ENCODE measurements at regions of chr17 and their contacts with region 1.

Region 1: DNA sequence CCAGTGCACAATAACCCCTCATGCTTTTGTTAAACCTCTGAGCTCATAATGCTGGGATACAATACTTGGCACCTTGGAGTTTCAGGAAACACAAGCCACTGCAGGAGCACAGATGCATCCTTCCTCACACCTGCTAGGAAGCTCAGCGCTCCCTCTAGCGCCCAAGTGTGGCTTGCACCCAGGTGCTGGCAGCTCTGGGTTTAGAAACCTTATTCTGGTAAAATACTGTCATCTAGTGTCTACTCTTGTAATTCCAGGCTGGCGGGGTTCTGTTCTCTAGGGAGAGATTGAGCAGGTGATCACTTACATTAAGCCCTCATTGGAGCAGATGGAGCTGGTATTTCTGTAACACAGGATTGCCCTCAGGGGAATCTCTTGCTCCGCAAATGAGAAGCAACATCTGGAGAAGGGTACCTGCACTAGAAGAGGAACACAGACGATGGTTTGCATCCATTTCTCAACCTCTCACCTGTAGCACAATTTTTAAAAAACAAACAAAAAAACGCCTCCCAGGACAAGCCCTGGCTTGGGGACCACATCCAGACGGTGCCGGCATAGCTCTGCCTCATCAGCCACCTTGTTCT is 1.5 kb downstream of the CCL1 start:
- DNase-seq: peak; percentile 87
- H3K4me3 Mint-ChIP-seq: no peak overlapping the region
- H3K27ac Mint-ChIP-seq: no peak overlapping the region
- H3K4me1 Mint-ChIP-seq: peaks cover 35% of the 10 kb centered on the region
- H3K27me3 Mint-ChIP-seq: peaks cover 57% of the 10 kb centered on the region

Region 2: DNA sequence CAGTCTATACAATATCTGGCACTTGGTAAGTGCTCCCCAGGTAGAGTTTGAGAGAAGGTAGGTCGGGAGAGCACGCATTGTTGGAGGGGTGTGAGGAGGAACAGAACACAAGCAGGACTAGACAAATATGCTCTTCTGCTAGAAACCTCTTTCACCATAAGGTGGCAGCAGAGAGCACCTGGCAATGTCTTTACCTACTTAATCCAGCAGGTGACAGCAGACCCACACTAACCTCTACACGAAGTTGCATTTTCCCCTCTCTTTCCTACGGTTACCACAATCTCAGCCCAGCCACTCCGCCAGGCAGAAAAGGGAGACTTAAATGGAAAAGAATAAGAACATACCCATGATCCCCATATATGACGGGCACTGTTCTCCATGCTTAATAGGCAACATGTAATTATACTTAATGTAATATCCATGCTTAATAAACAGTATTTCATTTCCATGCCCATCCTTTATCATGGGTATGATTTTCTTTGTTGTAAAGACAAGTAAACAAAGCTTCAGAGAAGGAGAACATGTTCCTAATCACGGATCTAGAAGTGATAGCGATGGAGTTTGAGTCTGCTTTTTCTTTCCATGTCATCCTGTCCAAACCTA is 161.5 kb before region 1 on chr17:
- CTCF ChIA-PET with region 1: interaction called, 316 read pairs
- DNase-seq: peak; percentile 77
- H3K4me3 Mint-ChIP-seq: no peak overlapping the region
- H3K27ac Mint-ChIP-seq: no peak overlapping the region
- H3K4me1 Mint-ChIP-seq: no peaks in the 10 kb centered on the region
- H3K27me3 Mint-ChIP-seq: peaks cover 32% of the 10 kb centered on the region

Region 3: DNA sequence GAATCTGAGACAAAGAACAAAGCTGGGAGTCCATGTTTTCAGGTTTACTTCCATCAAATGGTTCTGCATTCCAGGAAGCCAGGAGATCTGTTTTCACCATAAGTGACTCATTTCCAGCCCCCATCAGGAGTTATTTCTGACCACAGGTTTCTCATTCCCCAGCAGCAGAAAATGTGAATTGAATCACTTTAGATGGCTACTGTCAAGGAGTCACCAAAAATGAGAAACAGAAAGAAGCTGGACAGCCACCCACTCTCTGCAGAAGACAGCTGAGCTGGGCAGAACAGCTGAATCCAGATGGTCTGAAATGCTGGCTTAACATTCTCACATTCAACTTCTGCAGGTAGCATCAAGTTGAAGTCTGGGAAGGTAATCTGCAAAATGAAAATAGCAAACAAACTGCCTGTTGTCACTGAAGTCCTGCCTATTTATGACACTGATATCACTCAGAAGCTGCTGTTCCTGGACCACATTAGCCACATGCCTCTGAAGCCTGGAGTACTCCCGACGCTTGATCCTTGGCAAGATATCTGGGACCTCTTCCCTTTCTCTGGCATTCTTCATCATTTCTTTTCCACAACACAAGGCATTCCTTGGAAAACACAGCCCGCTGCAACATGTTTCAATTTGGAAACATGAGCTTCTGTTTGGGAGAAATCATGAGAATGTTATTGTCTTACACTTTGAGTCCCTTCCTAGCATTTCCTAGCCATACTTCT is 60.8 kb before region 1 on chr17:
- CTCF ChIA-PET with region 1: interaction called, 26 read pairs
- DNase-seq: no peak
- H3K4me3 Mint-ChIP-seq: no peak overlapping the region
- H3K27ac Mint-ChIP-seq: no peak overlapping the region
- H3K4me1 Mint-ChIP-seq: no peaks in the 10 kb centered on the region
- H3K27me3 Mint-ChIP-seq: peaks cover 8% of the 10 kb centered on the region

Region 4: GRCh38 chr17:34386697-34387550 is 25.4 kb after region 1 on chr17:
- CTCF ChIA-PET with region 1: interaction called, 69 read pairs
- DNase-seq: no peak
- H3K4me3 Mint-ChIP-seq: no peak overlapping the region
- H3K27ac Mint-ChIP-seq: peak overlapping the region; percentile 24
- H3K4me1 Mint-ChIP-seq: peaks cover 65% of the 10 kb centered on the region
- H3K27me3 Mint-ChIP-seq: peaks cover 58% of the 10 kb centered on the region

Region 5: DNA sequence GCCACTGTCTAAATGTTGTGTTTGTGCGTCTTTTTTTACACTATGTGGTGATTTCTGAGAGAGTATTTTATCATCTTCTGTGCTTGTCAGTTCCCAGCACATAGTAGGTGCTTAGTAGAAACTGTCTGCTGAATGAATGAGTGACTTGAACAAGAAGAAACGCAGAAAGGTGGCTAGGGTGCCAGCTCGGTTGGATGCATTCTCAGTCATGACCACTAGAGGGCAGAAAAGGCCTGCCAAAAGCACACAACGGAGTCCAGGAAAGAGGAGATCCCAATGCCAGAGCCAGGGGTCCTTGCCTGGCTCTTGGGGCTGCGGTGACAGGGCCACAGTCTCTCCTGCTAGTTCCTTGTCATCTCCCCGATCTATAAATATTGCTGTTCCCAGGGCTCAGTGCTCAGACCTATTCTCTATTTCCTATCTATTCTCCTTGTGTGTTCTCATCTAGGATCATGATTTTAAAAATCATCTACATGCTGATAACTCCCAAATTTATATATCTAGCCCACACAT is 58.7 kb after region 1 on chr17:
- CTCF ChIA-PET with region 1: interaction called, 10 read pairs
- DNase-seq: peak; percentile 74
- H3K4me3 Mint-ChIP-seq: no peak overlapping the region
- H3K27ac Mint-ChIP-seq: no peak overlapping the region
- H3K4me1 Mint-ChIP-seq: peaks cover 6% of the 10 kb centered on the region
- H3K27me3 Mint-ChIP-seq: peaks cover 61% of the 10 kb centered on the region